Left ventricle myocardium superior (tissue), 1 donor: ENCODE measurements at regions of chr14 and their contacts with region 1.

Region 1: GRCh38 chr14:30656190-30656632 is 34.1 kb downstream of the SCFD1 start:
- DNase-seq: no peak
- ATAC-seq: peak; percentile 59

Region 2: DNA sequence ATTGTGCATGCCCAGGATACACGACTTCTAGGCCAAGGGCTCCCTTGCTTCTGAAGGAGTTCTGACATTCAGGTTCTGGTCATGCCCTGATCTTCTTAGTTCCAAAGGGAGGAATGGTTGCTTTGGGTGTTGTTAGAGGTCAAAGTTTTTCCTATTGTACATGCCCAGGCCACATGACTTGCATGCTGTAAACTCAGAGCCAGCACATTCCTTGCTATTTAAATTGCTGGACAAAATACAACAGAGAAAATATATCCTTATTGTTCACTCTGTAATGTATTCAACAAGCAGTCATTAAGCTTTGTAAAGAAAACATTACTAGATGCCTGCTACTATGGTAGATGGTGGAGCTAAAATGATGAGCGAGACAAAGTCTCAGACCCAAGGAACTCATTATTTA is 147.0 kb after region 1 on chr14:
- intact Hi-C with region 1: no loop called
- DNase-seq: no peak
- ATAC-seq: peak; percentile 21

Region 3: GRCh38 chr14:30906752-30907658 is 250.8 kb after region 1 on chr14:
- intact Hi-C with region 1: loop called (anchors 10 kb)
- DNase-seq: no peak
- ATAC-seq: no peak